ENCODE measurements at regions of chr3 and their contacts with region 1.

Region 1: DNA sequence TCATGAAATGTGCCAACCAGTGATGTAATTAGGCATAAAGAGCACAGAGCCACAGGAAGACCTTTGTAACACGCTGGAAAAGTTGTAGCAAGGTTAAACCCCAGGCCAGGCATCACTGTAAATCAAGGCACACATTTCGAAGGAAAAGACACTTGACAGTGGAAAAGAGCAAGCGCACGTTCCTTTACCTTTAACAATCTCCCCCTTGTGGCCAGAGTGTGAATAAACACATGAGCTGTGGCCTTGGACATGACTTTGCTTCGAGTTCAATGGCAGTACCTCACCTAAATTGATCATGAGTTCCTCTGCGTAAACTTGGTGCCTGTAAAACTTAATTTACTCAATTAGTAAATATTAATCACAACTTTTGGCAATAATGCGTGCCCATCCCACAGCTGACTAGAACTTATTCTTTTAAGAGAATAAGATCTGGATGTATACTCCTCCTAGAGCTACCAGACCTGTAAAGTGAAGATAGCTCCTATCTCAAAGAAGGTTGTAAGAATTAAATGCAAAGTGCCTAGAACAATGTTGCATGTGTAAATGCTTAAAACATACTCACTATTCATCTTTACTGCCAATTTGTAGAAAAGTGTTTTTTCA is 757.0 kb upstream of the NECTIN3 start:
- DNase-seq: peak; percentile 64
- ATAC-seq: peak; percentile 78
- H3K4me3 ChIP-seq: no peak overlapping the region
- H3K27ac ChIP-seq: no peak overlapping the region
- H3K4me1 ChIP-seq: no peaks in the 10 kb centered on the region
- H3K27me3 ChIP-seq: no peaks in the 10 kb centered on the region
- CTCF ChIP-seq: peak; percentile 77
- EP300 ChIP-seq: no peak
- POLR2A ChIP-seq: no peak
- RAD21 ChIP-seq: no peak

Region 2: GRCh38 chr3:109275702-109276293 is 1038.8 kb before region 1 on chr3:
- CTCF ChIA-PET with region 1: no interaction called
- POLR2A ChIA-PET with region 1: no interaction called
- in situ Hi-C with region 1: no loop called
- intact Hi-C with region 1: loop called (anchors 2 kb)
- DNase-seq: peak; percentile 42
- ATAC-seq: peak; percentile 91
- H3K4me3 ChIP-seq: no peak overlapping the region
- H3K27ac ChIP-seq: no peak overlapping the region
- H3K4me1 ChIP-seq: no peaks in the 10 kb centered on the region
- H3K27me3 ChIP-seq: no peaks in the 10 kb centered on the region
- CTCF ChIP-seq: peak; percentile 76
- EP300 ChIP-seq: no peak
- POLR2A ChIP-seq: no peak
- RAD21 ChIP-seq: 0 out of 2 replicates have a peak, but pooled peaks have one; percentile 33

Region 3: DNA sequence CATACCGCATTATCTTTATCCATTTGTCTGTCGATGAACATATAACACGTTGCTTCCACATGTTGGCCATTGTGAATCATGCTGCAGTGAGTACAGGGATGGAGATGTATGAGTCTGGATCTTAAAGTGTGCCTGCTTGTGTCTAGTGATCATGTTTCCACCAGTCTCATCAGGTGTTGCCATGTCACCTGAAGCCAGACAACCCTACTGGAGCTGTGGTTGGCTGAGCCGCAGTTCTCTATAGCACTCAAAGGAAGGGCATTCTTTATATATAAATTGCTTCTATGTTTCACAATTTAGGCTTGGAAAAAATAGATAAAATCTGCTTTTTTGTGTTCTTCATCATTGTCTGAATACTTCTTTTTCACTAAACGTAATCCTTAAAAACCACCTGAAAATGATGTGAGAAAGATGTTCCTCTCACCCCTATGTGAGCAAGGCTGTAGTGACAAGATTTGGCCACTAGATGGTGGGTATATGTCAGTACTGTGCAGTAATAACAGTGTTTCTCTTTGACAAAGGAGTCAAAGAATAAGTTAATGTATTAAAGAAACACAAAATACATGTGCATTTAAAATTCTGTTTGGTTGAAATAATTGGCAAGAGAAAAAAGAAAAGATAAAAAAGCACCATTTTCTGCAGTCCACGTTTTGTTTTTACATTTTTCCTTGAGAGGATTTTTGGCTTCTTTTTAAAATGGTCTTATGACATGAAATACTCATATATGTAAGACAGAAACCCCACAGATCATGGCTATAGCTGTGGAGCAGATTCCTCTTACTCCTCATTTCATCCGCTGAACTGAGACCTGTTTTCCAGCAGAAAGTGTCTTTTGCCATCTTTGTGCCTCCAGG is 582.8 kb before region 1 on chr3:
- CTCF ChIA-PET with region 1: no interaction called
- POLR2A ChIA-PET with region 1: no interaction called
- in situ Hi-C with region 1: no loop called
- intact Hi-C with region 1: loop called (anchors 1 kb)
- DNase-seq: peak; percentile 27
- ATAC-seq: peak; percentile 89
- H3K4me3 ChIP-seq: no peak overlapping the region
- H3K27ac ChIP-seq: no peak overlapping the region
- H3K4me1 ChIP-seq: no peaks in the 10 kb centered on the region
- H3K27me3 ChIP-seq: no peaks in the 10 kb centered on the region
- CTCF ChIP-seq: peak; percentile 73
- EP300 ChIP-seq: no peak
- POLR2A ChIP-seq: no peak
- RAD21 ChIP-seq: 0 out of 2 replicates have a peak, but pooled peaks have one; percentile 17

Region 4: GRCh38 chr3:109995377-109995776 is 319.2 kb before region 1 on chr3:
- CTCF ChIA-PET with region 1: no interaction called
- POLR2A ChIA-PET with region 1: no interaction called
- in situ Hi-C with region 1: no loop called
- intact Hi-C with region 1: no loop called
- DNase-seq: no peak
- ATAC-seq: no peak
- H3K4me3 ChIP-seq: no peak overlapping the region
- H3K27ac ChIP-seq: no peak overlapping the region
- H3K4me1 ChIP-seq: no peaks in the 10 kb centered on the region
- H3K27me3 ChIP-seq: no peaks in the 10 kb centered on the region
- CTCF ChIP-seq: no peak
- EP300 ChIP-seq: no peak
- POLR2A ChIP-seq: no peak
- RAD21 ChIP-seq: no peak

Region 5: DNA sequence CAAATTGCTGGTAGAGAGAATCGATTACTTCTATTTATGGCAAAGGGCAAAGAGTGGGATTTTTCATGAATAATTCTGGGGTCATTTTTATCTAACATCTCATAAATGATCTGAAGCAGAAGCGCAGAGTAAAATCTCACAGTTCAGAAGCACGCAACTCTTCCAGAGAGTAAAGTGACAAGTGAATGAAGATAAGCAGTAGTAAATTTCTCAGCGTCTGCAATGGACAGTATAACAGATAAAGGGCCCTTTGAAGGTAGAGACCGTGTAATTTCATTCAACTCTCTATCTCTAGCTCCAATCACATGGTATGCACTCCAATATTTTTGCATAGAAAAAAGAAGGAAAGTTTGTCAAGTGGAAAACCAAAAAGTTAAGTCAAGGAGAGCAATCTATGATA is 235.9 kb after region 1 on chr3:
- CTCF ChIA-PET with region 1: no interaction called
- POLR2A ChIA-PET with region 1: no interaction called
- in situ Hi-C with region 1: no loop called
- intact Hi-C with region 1: no loop called
- DNase-seq: no peak
- ATAC-seq: no peak
- H3K4me3 ChIP-seq: no peak overlapping the region
- H3K27ac ChIP-seq: no peak overlapping the region
- H3K4me1 ChIP-seq: no peaks in the 10 kb centered on the region
- H3K27me3 ChIP-seq: no peaks in the 10 kb centered on the region
- CTCF ChIP-seq: no peak
- EP300 ChIP-seq: no peak
- POLR2A ChIP-seq: no peak
- RAD21 ChIP-seq: no peak

Region 6: GRCh38 chr3:111080413-111080812 is 765.8 kb after region 1 on chr3:
- CTCF ChIA-PET with region 1: no interaction called
- POLR2A ChIA-PET with region 1: no interaction called
- in situ Hi-C with region 1: no loop called
- intact Hi-C with region 1: loop called (anchors 10 kb)
- DNase-seq: peak; percentile 39
- ATAC-seq: peak; percentile 63
- H3K4me3 ChIP-seq: no peak overlapping the region
- H3K27ac ChIP-seq: no peak overlapping the region
- H3K4me1 ChIP-seq: peaks cover 34% of the 10 kb centered on the region
- H3K27me3 ChIP-seq: no peaks in the 10 kb centered on the region
- CTCF ChIP-seq: peak; percentile 47
- EP300 ChIP-seq: no peak
- POLR2A ChIP-seq: no peak
- RAD21 ChIP-seq: no peak

Measured in HepG2 (cell line).